Activated T-helper 1 cell treated with anti-CD3 and anti-CD28 coated beads, Interleukin-12 subunit alpha, Interleukin-12 subunit beta, Interleukin-2, Interleukin-4 antibody, amounts not matched to agents 30 ng/mL and 10 ng/mL and 1 ng/mL, durations not matched to agents 14 hours and 24 hours and 36 hours (primary cell): ENCODE measurements at regions of chr19 and their contacts with region 1.

Region 1: DNA sequence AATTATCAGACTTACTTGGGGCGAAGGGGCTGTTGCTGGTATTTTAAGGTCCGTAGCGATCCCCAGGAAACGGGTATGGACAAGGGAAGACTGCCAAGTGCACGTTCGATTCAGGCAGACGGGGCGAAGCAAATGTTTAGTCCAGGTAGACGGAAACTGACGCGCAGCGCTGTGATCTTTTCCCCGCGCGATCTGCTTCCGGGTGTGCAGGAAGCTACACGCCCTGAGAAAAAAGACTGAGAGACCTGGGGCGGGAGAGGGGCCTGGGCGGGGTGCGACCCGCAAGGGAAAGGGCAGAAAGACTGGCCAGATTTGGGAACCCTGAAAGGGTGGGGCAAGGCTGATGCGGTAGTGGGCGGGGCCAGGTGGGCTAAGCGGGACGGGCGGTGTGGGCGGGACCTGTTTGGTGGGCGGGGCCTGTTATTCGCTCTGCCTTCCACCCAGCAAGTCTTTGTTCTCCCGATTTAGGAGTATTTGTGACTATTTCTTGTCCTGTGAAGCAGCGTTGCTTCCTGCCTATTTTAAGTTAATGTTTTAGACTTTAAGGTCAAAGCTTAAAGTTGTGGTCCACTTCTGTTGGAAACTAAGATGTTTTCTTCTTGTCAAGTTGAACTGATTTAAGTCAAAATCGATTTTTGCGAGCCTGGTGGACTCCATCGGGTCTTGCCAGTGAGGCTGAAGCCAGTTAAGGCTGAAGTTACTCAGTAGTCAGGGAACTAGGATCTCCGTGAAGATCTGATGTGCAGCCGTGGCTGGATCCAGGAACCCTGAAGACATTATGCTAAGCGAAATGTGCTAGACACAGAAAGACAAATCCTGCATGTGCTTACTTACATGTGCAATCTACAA is at the start of gene ZNF836:
- DNase-seq: peak; percentile 83
- H3K4me3 Mint-ChIP-seq: peak within 1 kb of the TSS; percentile 97
- H3K27ac Mint-ChIP-seq: peak within 1 kb of the TSS; percentile 90
- H3K4me1 Mint-ChIP-seq: peaks cover 11% of the 10 kb centered on the region
- H3K27me3 Mint-ChIP-seq: no peaks in the 10 kb centered on the region
- total RNA-seq, gene ZNF836: 7.8 and 10.8 TPM in 2 replicates

Region 2: DNA sequence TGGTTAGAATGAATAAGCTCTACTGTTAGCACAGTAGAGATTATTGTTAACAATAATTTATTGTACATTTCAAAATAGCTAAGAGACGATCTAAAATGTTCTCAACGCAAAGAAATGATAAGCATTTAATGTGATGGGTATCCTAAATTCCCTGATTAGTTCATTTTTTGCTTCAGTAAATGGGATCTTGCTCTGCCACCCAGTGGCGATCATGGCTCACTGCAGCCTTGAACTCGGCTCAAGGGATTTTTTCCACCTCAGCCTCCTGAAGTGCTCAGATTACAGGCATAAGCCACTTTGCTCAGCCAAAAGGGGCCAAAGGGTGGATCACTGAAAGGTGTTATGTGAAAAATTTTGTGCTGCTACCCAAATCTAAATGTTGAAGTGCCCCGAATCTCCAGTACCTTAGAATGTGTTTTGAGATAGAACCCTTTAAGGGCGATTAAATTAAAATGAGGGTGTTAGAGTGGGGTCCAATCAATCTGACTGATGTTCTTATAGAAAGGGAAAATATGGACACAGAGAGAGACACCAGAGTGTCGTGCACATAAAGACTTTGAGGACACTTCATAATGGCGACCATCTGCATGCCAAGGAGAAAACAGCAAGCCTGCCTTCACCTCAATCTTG is 66.3 kb after region 1 on chr19:
- intact Hi-C with region 1: loop called (anchors 1 kb)
- DNase-seq: peak; percentile 34
- H3K4me3 Mint-ChIP-seq: no peak overlapping the region
- H3K27ac Mint-ChIP-seq: no peak overlapping the region
- H3K4me1 Mint-ChIP-seq: no peaks in the 10 kb centered on the region
- H3K27me3 Mint-ChIP-seq: peaks cover 1% of the 10 kb centered on the region

Region 3: GRCh38 chr19:52277574-52277925 is 106.0 kb after region 1 on chr19:
- intact Hi-C with region 1: no loop called
- DNase-seq: no peak
- H3K4me3 Mint-ChIP-seq: no peak overlapping the region
- H3K27ac Mint-ChIP-seq: no peak overlapping the region
- H3K4me1 Mint-ChIP-seq: peaks cover 3% of the 10 kb centered on the region
- H3K27me3 Mint-ChIP-seq: no peaks in the 10 kb centered on the region